ENCODE measurements at regions of chr3 and their contacts with region 1.

Region 1: GRCh38 chr3:99833617-99834205 is 16.0 kb downstream of the CMSS1 start:
- DNase-seq: no peak
- H3K4me3 ChIP-seq: no peak overlapping the region
- H3K27me3 ChIP-seq: no peaks in the 10 kb centered on the region
- CTCF ChIP-seq: no peak

Region 2: DNA sequence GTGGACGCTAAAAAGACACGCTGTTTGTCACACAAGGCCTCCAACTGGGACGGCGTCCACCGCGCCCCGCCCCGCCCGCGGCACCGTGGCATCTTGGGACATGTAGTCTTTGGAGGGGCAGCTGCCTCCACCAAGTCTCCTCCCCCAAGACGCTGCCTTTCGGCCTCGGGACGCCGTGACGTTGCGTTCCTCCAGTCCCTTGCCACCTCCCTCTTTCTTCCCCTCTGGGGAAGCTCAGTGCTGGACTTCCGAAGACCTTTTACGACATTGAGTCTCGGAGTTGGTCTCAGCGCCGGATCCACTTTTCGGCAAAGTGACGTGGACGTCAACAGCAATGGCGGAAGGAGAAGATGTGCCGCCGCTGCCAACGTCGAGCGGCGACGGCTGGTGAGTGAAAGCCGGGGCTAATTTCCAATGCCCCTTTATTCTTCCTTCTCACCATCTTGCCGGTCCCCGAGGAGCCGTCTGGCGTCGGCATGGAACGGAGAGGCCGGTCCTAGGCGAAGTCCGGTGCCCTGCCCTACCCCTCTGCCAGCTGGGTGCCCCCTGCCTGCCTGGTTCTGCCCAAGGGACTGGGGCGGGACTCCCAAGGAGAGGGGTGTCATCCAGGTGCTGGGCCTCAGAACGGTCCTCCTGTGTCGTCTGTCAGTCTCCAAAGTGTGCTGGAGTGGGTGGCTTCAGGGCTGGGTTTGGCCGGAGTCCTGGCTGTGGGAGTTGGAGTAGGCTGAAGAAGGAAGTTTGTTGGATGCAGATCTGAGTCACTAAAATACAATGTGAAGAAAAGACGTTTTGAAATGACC is 427.2 kb after region 1 on chr3 and contains the start of gene TBC1D23:
- CTCF ChIA-PET with region 1: interaction called, 5 read pairs
- POLR2A ChIA-PET with region 1: interaction called, 13 read pairs
- DNase-seq: peak; percentile 99
- H3K4me3 ChIP-seq: peak within 1 kb of the TSS; percentile 100
- H3K27me3 ChIP-seq: no peaks in the 10 kb centered on the region
- CTCF ChIP-seq: 0 out of 2 replicates have a peak, but pooled peaks have one; percentile 20
- polyA plus RNA-seq, gene TBC1D23: 22.5 and 46.7 TPM in 2 replicates

Measured in BJ (cell line).